Activated naive CD4-positive, alpha-beta T cell treated with anti-CD3 and anti-CD28 coated beads for 36 hours (primary cell): ENCODE measurements at regions of chr5 and their contacts with region 1.

Region 1: DNA sequence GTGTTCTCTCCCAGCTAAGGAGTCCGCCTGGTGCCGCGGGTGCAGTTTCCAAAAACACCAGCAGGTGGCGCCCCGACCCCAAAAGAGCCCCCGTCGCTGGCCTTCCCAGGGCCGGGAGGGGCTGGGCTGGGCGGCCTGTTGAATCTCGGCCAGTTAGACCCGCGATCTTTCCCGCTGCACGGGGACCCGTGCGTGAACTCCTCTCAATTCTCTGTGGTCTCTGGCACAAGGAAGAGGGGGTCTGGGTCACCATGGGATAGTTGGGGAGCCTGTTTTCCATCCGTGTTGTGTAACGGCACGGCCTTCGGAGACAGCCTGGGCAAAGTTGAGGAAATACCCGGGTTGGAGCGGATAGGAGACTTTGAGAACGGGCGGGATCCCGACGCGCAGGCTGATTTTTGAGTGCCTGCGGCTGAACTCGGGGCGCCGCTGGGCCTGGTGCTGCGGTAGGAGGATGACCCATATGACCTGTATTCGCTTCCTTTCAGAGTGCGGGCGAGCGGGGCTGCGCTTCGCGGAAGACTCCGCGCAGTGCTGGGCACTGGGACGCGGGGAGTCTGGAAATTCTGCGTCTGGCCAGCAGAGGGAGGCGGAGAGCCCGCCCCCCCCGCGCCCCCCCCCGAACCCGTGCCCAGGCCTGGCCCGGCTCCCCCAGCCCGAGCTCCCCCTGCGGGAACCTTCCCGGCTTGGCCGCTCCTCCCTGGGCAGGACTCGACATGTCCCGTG is 7.9 kb upstream of the PSD2 start:
- DNase-seq: peak; percentile 86
- H3K4me3 Mint-ChIP-seq: peak overlapping the region; percentile 75
- H3K27ac Mint-ChIP-seq: no peak overlapping the region
- H3K4me1 Mint-ChIP-seq: peaks cover 6% of the 10 kb centered on the region
- H3K27me3 Mint-ChIP-seq: peaks cover 14% of the 10 kb centered on the region

Region 2: GRCh38 chr5:139474890-139475791 is 312.6 kb before region 1 on chr5:
- CTCF ChIA-PET with region 1: no interaction called
- intact Hi-C with region 1: no loop called
- DNase-seq: peak; percentile 41
- H3K4me3 Mint-ChIP-seq: peak overlapping the region; percentile 35
- H3K27ac Mint-ChIP-seq: peak overlapping the region; percentile 84
- H3K4me1 Mint-ChIP-seq: peaks cover 83% of the 10 kb centered on the region
- H3K27me3 Mint-ChIP-seq: no peaks in the 10 kb centered on the region

Region 3: DNA sequence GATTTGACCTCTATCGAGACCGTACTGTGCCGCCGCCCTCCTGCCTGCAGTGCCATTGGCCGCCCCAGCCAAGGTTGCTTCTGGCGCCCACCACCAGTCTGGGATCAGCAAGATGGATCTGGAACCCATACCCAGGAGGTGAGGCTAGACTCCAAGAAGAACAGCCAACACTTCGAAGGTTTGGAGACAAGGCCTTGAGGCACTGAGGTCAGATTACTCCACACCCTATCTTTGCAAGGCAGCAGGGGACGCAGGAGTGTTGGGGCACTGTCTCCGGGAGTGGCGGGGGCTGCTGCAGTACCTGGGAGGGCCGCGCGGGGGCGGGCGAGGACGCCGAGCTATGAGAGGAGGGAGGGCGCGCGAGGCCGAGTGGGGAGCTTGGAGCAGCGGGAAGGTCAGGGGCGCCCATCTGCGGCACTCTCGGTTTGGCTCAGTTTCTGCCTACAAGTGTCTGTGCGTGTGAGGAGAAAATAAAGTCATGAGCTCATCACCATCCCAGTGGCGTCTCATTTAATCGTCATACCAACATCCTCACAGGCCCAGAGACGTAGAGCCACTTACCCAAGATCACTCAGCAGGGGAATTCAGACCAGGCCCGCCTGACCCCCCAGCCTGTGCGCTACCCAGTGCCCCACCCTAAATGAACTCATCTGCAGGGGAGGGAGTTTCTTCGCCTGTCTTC is 12.6 kb before region 1 on chr5:
- CTCF ChIA-PET with region 1: interaction called, 46 read pairs
- intact Hi-C with region 1: no loop called
- DNase-seq: peak; percentile 84
- H3K4me3 Mint-ChIP-seq: peak overlapping the region; percentile 14
- H3K27ac Mint-ChIP-seq: no peak overlapping the region
- H3K4me1 Mint-ChIP-seq: peaks cover 8% of the 10 kb centered on the region
- H3K27me3 Mint-ChIP-seq: no peaks in the 10 kb centered on the region

Region 4: GRCh38 chr5:139837631-139838422 is 50.1 kb after region 1 on chr5:
- CTCF ChIA-PET with region 1: interaction called, 48 read pairs
- intact Hi-C with region 1: no loop called
- DNase-seq: no peak
- H3K4me3 Mint-ChIP-seq: no peak overlapping the region
- H3K27ac Mint-ChIP-seq: no peak overlapping the region
- H3K4me1 Mint-ChIP-seq: no peaks in the 10 kb centered on the region
- H3K27me3 Mint-ChIP-seq: peaks cover 8% of the 10 kb centered on the region

Region 5: GRCh38 chr5:139844472-139845145 is 56.9 kb after region 1 on chr5:
- CTCF ChIA-PET with region 1: interaction called, 48 read pairs
- intact Hi-C with region 1: loop called (anchors 1 kb)
- DNase-seq: peak; percentile 90
- H3K4me3 Mint-ChIP-seq: no peak overlapping the region
- H3K27ac Mint-ChIP-seq: no peak overlapping the region
- H3K4me1 Mint-ChIP-seq: peaks cover 5% of the 10 kb centered on the region
- H3K27me3 Mint-ChIP-seq: peaks cover 16% of the 10 kb centered on the region

Region 6: DNA sequence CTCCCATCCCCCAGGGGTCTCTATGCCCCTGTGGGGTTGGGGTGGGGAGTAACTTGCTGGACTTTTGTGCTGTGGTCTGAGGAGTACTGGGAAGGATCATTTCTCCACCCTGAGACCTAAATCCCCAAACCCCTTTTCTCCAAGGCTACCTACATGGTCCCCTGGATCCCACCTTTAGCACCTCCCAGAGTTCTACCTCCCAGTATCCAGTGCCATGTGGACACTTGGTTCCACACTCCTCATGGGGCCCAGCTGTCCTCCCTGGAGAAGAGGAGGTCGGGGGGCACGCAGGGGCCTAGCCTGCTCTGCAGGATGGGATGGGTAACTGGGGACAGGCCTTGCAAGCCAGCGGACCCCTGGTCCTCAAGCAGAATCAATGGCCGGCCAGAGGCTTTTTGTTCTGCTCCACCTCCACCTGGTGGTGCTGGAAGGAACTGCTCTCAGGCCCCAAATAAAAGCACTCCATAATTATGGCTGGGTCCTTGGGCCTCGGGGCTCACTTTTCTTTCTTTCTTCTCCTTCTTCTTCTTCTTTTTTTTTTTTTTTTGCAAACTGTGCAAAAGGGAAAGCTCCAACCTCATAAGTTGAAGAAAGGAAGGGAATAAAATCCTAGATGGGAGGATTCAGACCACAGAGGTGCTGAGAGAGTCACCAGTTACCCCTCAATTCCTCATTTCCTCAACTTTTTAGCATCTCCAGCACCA is 76.3 kb after region 1 on chr5:
- CTCF ChIA-PET with region 1: interaction called, 59 read pairs
- intact Hi-C with region 1: loop called (anchors 1 kb)
- DNase-seq: peak; percentile 69
- H3K4me3 Mint-ChIP-seq: no peak overlapping the region
- H3K27ac Mint-ChIP-seq: no peak overlapping the region
- H3K4me1 Mint-ChIP-seq: no peaks in the 10 kb centered on the region
- H3K27me3 Mint-ChIP-seq: no peaks in the 10 kb centered on the region